ENCODE measurements at regions of chr3 and their contacts with region 1.

Region 1: DNA sequence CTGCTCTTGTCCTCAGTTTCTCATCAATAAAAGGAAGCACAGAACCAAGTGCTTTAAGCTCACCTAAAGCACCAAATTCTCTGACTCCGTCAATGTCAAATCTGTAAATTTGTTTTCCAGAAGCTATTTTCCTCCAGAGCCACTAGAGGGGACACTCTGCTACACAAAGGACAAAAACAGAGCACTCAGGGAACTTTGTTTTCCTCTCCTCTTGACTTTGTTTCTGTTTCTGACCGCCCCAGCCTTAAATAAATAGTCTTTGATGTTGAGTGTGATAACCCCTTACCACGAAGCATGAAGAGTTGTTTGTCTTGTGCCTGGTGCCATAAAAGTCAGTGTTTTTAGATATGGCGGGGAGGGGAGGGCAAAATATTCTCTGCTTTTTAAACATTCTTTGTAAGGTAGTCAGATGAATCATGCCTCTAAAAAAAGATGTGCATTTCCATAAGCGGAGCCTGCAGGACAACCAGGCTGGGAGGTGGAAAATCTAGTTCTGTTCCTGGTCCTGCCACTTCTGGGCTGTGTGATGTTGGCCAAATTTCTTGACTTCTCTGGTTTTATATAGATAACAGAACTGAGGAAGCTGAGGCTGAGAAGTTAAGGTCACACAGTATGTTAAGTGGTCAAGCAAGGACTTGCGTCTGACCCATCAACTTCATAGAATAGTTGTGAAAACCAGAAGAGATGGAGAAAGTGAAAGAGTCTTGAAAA is 7.3 kb upstream of the ZBTB38 start:
- DNase-seq: no peak
- H3K4me3 ChIP-seq: no peak overlapping the region
- H3K27ac ChIP-seq: peak overlapping the region; percentile 57
- H3K27me3 ChIP-seq: no peaks in the 10 kb centered on the region
- CTCF ChIP-seq: peak; percentile 73

Region 2: GRCh38 chr3:141303481-141304223 is 57.4 kb before region 1 on chr3:
- CTCF ChIA-PET with region 1: interaction called, 13 read pairs
- POLR2A ChIA-PET with region 1: no interaction called
- DNase-seq: peak; percentile 73
- H3K4me3 ChIP-seq: no peak overlapping the region
- H3K27ac ChIP-seq: no peak overlapping the region
- H3K27me3 ChIP-seq: no peaks in the 10 kb centered on the region
- CTCF ChIP-seq: peak; percentile 72

Region 3: GRCh38 chr3:141311496-141312353 is 49.3 kb before region 1 on chr3:
- CTCF ChIA-PET with region 1: interaction called, 21 read pairs
- POLR2A ChIA-PET with region 1: interaction called, 8 read pairs
- DNase-seq: peak; percentile 95
- H3K4me3 ChIP-seq: peak overlapping the region; percentile 90
- H3K27ac ChIP-seq: peak overlapping the region; percentile 65
- H3K27me3 ChIP-seq: no peaks in the 10 kb centered on the region
- CTCF ChIP-seq: peak; percentile 76

Region 4: DNA sequence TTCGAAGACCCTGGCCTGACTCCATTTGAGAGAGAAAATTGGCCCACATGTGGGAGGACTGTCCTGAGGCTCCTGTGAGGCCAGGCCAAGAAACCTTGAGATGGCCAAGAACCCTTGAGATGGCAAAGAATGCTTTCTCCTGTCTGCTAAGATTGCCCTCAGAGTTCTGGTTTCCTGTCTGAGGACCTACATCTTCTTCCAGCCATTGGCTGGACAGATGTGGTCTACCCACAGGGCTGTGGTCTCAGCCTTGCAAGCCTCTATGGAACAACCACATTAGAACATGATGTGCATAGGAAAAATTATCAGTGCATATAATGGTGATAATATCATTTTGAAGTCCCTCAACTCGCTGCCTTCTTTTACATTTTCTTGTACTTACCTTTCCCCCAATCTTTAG is 115.0 kb after region 1 on chr3:
- CTCF ChIA-PET with region 1: no interaction called
- POLR2A ChIA-PET with region 1: no interaction called
- DNase-seq: no peak
- H3K4me3 ChIP-seq: no peak overlapping the region
- H3K27ac ChIP-seq: no peak overlapping the region
- H3K27me3 ChIP-seq: no peaks in the 10 kb centered on the region
- CTCF ChIP-seq: no peak